Head of caudate nucleus (tissue), 42 donors: ENCODE measurements at regions of chr17 and their contacts with region 1.

Region 1: DNA sequence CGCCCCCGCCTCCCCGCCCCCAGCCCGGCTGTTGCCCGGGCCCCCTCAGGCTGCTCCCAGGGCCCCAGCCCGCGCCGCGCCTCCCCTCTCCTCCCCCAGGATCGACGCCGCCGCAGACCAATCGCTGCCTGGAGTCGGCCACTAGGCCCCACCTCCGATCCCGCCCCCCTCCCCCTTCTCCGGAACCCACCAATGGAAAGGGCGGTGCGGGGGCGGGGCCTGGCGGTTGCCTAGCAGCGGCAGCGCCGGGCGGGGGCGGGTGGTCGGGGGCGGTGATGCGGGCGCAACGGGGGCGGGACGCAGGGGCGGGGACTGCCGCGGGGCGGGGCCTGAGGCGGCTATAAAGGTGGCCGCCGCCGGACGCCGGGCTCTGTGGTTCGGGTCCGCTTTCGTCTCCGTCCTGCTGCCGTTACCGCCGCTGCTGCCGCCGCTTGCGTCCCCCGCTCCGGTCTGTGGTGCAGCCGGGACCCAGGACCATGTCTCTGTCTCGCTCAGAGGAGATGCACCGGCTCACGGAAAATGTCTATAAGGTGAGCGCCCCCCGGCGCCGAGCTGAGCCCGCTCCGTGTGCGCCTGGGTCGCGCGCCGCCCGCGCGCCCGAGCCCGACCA is at the start of gene BAIAP2:
- DNase-seq: peak; percentile 89 to 99 (median 98)

Region 2: GRCh38 chr17:81064678-81065475 is 30.0 kb after region 1 on chr17:
- intact Hi-C with region 1: no loop called
- DNase-seq: peak in 29 of 42 donors; percentile 29 to 81 (median 56)

Region 3: DNA sequence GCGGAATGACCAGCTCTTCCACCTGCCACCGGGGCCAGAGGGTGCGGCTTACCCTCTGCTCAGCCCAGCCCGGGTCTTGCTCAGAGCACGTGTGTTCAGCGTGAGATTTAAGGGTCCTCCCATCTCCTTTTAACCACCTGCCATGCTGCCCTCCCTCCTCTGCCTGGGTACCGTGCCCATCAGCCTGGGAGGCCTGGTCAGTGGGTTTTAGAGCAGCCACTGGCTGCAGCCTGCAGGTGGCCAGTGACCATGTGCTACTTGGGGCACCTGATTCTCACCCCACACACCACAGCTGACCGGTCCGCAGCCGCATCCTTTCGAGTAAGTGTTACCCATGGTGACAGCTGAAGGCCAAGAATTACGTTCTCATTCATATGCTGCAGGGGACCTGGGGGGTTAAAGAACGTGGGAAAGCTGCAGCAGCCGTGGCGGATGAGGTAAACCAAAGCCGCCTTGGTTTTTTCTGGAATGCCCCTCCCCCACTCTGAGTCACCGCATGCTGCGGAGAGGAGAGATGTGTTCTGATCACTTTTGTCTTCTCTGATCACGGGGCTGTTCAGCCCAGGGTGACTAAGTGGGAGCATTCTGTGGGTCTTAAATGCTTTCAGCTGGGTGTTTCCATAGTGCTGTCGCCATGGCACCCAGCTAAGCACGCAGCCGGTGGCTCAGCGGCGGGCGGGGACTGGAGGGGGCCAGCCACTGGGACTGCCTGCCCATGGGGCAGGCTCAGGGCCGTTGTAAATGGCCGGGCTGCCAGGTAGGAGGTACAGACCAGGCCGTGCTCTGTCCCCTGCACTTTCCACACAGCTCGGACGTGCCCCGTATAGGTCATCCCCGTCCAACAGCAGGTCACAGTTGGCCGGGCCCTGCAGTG is 59.9 kb after region 1 on chr17:
- intact Hi-C with region 1: loop called (anchors 5 kb)
- DNase-seq: peak; percentile 72 to 97 (median 89)

Region 4: GRCh38 chr17:81222906-81223761 is 188.2 kb after region 1 on chr17 and contains the start of gene CEP131:
- intact Hi-C with region 1: loop called (anchors 10 kb)
- DNase-seq: peak; percentile 95 to 100 (median 99)